Mammary epithelial cell (primary cell): ENCODE measurements at regions of chr14 and their contacts with region 1.

Region 1: GRCh38 chr14:24271134-24271833 is at the start of gene RABGGTA:
- DNase-seq: peak; percentile 88
- H3K4me3 ChIP-seq: peak within 1 kb of the TSS; percentile 64 to 90 (median 70)
- H3K27ac ChIP-seq: peak within 1 kb of the TSS; percentile 84
- H3K4me1 ChIP-seq: peaks cover 29% of the 10 kb centered on the region
- H3K27me3 ChIP-seq: no peaks in the 10 kb centered on the region
- CTCF ChIP-seq: peak; percentile 55 to 81
- total RNA-seq, gene RABGGTA: 51.3 to 74.5 TPM

Region 2: DNA sequence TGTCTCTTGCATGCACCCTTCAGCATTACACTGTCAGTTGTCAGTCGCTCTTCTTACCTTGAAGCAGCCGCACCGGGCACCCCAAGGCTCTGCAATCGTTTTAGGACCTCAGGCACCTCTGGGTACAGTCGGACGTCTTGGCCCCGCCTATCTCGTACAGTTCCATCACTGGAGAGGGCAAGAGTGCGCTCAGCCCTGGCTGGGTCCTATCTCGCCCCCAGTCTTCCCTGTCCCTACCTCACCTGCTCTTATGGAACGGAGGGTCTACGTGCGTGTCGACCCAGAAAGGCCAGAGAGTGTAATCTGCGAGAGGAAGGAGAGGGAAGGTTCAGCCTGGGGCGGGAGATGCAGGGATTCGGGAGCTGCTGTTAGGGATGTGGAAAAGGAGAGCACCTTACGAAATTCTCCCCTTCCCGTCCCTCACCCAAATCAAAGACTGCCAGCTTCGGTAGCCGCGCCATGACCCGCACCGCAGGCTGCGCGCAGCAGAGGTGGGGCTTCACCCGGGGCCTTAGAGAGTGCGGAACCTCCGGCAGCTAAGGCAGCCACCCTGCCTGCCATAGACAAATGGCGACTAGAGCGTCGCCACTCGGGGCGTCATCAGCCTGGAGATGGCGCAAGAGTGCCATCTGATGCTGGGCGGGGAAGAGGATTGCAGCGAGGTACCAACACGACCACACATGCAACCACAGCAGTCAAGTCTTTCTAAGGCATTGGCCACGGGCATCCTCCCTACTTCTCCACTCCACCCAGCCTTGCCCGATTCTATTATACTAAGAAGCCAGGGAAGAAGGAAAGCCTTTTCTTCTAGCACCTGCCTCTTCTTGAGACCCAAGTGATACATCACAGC is 55.6 kb before region 1 on chr14 and contains the start of gene MDP1:
- CTCF ChIA-PET with region 1: no interaction called
- dilution Hi-C with region 1: no loop called
- in situ Hi-C with region 1: no loop called
- intact Hi-C with region 1: loop called (anchors 1 kb)
- DNase-seq: peak; percentile 83
- H3K4me3 ChIP-seq: peak within 1 kb of the TSS; percentile 34 to 86 (median 46)
- H3K27ac ChIP-seq: peak within 1 kb of the TSS; percentile 42
- H3K4me1 ChIP-seq: peaks cover 14% of the 10 kb centered on the region
- H3K27me3 ChIP-seq: no peaks in the 10 kb centered on the region
- CTCF ChIP-seq: peak; percentile 39 to 60
- total RNA-seq, gene MDP1: 6.5 to 12.0 TPM

Region 3: DNA sequence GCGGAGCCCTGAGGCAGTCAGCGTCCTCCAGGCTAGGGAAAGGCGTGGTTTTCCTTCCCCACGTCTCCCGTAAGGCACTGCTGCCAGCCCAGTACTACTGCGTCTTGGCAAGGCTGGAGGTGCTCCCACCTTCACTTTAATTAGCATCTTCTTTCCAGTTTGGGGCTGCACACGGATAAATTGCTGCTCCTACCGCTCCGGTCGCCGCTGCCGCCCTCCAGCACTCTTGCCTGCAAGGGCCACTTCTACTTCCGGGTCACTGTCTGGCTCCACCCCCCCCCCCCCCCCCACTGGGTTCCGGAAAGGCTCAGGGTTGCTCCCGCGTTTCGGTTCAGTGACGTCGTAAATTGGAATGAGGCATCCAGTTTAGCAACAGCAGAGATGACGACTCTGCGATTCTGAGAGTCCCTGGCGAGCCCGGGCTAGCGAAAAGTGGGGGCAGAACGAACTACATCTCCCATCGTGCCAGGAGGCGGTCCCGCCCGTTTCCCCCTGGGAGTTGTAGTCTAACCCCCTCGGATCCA is 39.1 kb before region 1 on chr14 and contains the start of gene NEDD8:
- CTCF ChIA-PET with region 1: no interaction called
- dilution Hi-C with region 1: no loop called
- in situ Hi-C with region 1: no loop called
- intact Hi-C with region 1: loop called (anchors 5 kb)
- DNase-seq: peak; percentile 99
- H3K4me3 ChIP-seq: peak within 1 kb of the TSS; percentile 52 to 67 (median 65)
- H3K27ac ChIP-seq: peak within 1 kb of the TSS; percentile 95
- H3K4me1 ChIP-seq: peaks cover 13% of the 10 kb centered on the region
- H3K27me3 ChIP-seq: no peaks in the 10 kb centered on the region
- CTCF ChIP-seq: no peak
- total RNA-seq, gene NEDD8: 66.2 to 274 TPM

Region 4: DNA sequence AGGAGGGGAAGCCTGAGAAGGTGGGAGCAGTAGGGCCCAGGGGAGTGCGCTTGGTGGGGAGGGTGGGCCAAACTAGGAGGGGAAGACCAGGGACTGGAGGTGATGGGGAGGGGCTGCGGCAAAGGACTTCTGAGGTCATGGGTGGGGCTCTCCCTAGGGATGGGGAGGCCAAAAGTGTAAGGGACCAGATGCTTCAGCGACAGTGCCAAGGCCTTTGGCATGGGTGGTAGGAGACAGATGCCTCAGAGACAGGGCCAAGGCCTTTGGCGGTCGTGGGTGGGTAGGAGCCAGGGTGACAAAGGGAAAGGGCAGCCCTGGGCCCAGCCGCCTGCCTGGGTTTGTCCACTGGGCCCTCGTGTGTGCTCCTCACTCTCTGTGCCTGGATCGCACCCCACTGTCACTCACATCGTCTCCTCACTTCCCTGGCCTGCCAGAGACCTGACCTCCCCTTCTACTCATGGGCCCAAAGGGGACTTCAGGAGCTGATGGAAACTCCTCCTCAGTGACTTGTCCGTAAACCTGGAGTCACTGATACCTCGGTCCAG is 13.3 kb after region 1 on chr14:
- CTCF ChIA-PET with region 1: no interaction called
- dilution Hi-C with region 1: no loop called
- in situ Hi-C with region 1: no loop called
- intact Hi-C with region 1: loop called (anchors 1 kb)
- DNase-seq: no peak
- H3K4me3 ChIP-seq: no peak overlapping the region
- H3K27ac ChIP-seq: no peak overlapping the region
- H3K4me1 ChIP-seq: peaks cover 32% of the 10 kb centered on the region
- H3K27me3 ChIP-seq: no peaks in the 10 kb centered on the region
- CTCF ChIP-seq: no peak